CD4-positive, alpha-beta T cell (primary cell): ENCODE measurements at regions of chr12 and their contacts with region 1.

Region 1: DNA sequence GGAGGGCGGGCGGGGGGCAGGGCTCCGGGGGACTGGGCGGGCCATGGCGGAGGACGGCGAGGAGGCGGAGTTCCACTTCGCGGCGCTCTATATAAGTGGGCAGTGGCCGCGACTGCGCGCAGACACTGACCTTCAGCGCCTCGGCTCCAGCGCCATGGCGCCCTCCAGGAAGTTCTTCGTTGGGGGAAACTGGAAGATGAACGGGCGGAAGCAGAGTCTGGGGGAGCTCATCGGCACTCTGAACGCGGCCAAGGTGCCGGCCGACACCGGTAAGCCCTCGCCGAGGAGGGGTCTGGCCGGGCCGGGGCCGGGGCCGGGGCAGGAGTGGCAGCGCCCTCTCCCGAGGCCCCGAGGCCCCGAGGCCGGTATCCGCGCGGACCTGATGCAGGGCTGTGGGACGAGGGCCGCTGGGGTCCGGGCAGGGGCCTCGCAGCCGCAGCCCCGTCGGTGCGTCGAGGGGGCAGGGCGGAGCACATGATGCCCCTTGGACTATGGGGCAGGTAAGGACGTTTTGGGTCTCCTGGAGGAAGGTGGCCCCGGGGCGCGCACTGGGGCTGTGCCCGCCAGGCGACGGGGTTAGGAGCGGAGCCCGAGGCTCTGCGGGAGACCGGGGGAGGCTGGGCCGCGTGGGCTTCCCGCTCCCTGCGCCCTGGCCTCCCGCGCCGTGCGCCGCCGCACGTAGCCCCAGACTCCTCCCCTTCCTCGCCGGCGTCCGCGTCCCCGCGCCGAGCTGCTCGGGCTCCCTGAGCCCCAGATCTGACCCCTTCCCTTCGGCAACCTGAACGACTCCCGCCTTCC is at the start of gene TPI1:
- DNase-seq: peak; percentile 55 to 88 (median 72)
- ATAC-seq: peak; percentile 64
- H3K4me3 ChIP-seq: peak within 1 kb of the TSS; percentile 68
- H3K4me3 Mint-ChIP-seq: peak within 1 kb of the TSS; percentile 94
- H3K27ac ChIP-seq: peak within 1 kb of the TSS; percentile 73 to 78
- H3K27ac Mint-ChIP-seq: peak within 1 kb of the TSS; percentile 80
- H3K4me1 ChIP-seq: peaks cover 53% of the 10 kb centered on the region
- H3K4me1 Mint-ChIP-seq: peaks cover 56% of the 10 kb centered on the region
- H3K27me3 ChIP-seq: no peaks in the 10 kb centered on the region
- H3K27me3 Mint-ChIP-seq: no peaks in the 10 kb centered on the region
- CTCF ChIP-seq: no peak
- total RNA-seq, gene TPI1: 46.8 to 48.7 TPM

Region 2: DNA sequence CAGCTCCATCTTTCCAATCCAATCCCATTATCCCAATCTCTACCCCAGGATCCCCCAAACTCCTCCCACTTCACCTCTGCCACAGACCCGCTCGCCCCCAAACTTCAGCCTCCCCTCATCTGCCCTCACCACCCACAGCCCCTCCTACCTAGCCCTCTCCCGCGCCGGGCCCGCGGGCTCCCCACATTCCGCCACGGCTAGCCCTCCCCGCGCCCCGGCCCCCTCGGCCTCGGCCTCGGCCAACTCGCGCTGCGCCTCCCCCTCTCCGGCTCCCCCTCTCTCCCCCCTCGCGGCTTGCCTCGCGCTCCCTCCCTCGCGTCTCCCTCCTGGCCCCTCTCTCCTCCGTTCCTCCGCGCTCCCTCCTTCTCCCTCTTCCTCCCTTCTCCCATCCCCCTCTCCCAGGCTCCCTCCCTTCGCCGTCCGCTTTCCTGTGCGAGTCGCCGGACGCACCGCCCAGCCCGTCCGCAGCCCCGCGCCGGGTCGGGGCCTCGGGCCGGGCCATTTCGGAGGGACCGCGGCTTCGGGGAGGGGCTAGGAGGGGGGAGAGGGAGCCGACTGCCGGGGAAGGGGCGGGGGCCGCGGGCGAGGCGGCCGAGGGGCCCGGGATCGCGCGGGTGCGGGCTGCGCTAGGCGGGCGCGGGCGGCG is 59.9 kb after region 1 on chr12 and contains the start of gene ATN1:
- CTCF ChIA-PET with region 1: interaction called, 10 read pairs
- POLR2A ChIA-PET with region 1: interaction called, 3 read pairs
- intact Hi-C with region 1: no loop called
- DNase-seq: peak in 7 of 14 experiments; percentile 33 to 69 (median 54)
- ATAC-seq: peak; percentile 41
- H3K4me3 ChIP-seq: peak within 1 kb of the TSS; percentile 65
- H3K4me3 Mint-ChIP-seq: peak within 1 kb of the TSS; percentile 95
- H3K27ac ChIP-seq: peak within 1 kb of the TSS; percentile 79 to 82
- H3K27ac Mint-ChIP-seq: peak within 1 kb of the TSS; percentile 87
- H3K4me1 ChIP-seq: peaks cover 49% of the 10 kb centered on the region
- H3K4me1 Mint-ChIP-seq: peaks cover 56% of the 10 kb centered on the region
- H3K27me3 ChIP-seq: no peaks in the 10 kb centered on the region
- H3K27me3 Mint-ChIP-seq: no peaks in the 10 kb centered on the region
- CTCF ChIP-seq: no peak
- total RNA-seq, gene ATN1: 28.7 to 29.6 TPM

Region 3: GRCh38 chr12:6965026-6965661 is 97.5 kb after region 1 on chr12:
- CTCF ChIA-PET with region 1: interaction called, 8 read pairs
- POLR2A ChIA-PET with region 1: interaction called, 17 read pairs
- intact Hi-C with region 1: loop called (anchors 1 to 2 kb)
- DNase-seq: peak; percentile 83 to 96 (median 86)
- ATAC-seq: peak; percentile 50
- H3K4me3 ChIP-seq: no peak overlapping the region
- H3K4me3 Mint-ChIP-seq: peak overlapping the region; percentile 79
- H3K27ac ChIP-seq: peak overlapping the region; percentile 38 to 39
- H3K27ac Mint-ChIP-seq: peak overlapping the region; percentile 90
- H3K4me1 ChIP-seq: peaks cover 70% of the 10 kb centered on the region
- H3K4me1 Mint-ChIP-seq: peaks cover 58% of the 10 kb centered on the region
- H3K27me3 ChIP-seq: no peaks in the 10 kb centered on the region
- H3K27me3 Mint-ChIP-seq: no peaks in the 10 kb centered on the region
- CTCF ChIP-seq: peak; percentile 94

Region 4: GRCh38 chr12:7092229-7092985 is 224.8 kb after region 1 on chr12 and contains the start of gene C1R:
- CTCF ChIA-PET with region 1: interaction called, 5 read pairs
- POLR2A ChIA-PET with region 1: interaction called, 3 read pairs
- intact Hi-C with region 1: loop called (anchors 1 to 2 kb)
- DNase-seq: peak; percentile 57 to 83 (median 66)
- ATAC-seq: peak; percentile 79
- H3K4me3 ChIP-seq: peak within 1 kb of the TSS; percentile 52
- H3K4me3 Mint-ChIP-seq: peak within 1 kb of the TSS; percentile 88
- H3K27ac ChIP-seq: no peak within 1 kb of the TSS
- H3K27ac Mint-ChIP-seq: peak within 1 kb of the TSS; percentile 53
- H3K4me1 ChIP-seq: peaks cover 13% of the 10 kb centered on the region
- H3K4me1 Mint-ChIP-seq: peaks cover 8% of the 10 kb centered on the region
- H3K27me3 ChIP-seq: no peaks in the 10 kb centered on the region
- H3K27me3 Mint-ChIP-seq: no peaks in the 10 kb centered on the region
- CTCF ChIP-seq: peak; percentile 82
- total RNA-seq, gene C1R: 3.1 to 4.0 TPM